ENCODE measurements at regions of chr1 and their contacts with region 1.

Region 1: GRCh38 chr1:38012363-38013226 is at the start of gene UTP11:
- DNase-seq: peak; percentile 63 to 95 (median 93)
- ATAC-seq: peak; percentile 97
- H3K4me3 ChIP-seq: peak within 1 kb of the TSS; percentile 84
- H3K4me3 Mint-ChIP-seq: peak within 1 kb of the TSS; percentile 96 to 99 (median 99)
- H3K27ac ChIP-seq: peak within 1 kb of the TSS; percentile 87
- H3K27ac Mint-ChIP-seq: peak within 1 kb of the TSS; percentile 95 to 99 (median 97)
- H3K4me1 ChIP-seq: peaks cover 10 to 14% of the 10 kb centered on the region in 2 donors
- H3K4me1 Mint-ChIP-seq: peaks cover 25 to 70% (median 47%) of the 10 kb centered on the region in 7 donors
- H3K27me3 ChIP-seq: no peaks in the 10 kb centered on the region
- H3K27me3 Mint-ChIP-seq: no peaks in the 10 kb centered on the region
- total RNA-seq, gene UTP11: 8.2 to 42.8 (median 15.7) TPM

Region 2: DNA sequence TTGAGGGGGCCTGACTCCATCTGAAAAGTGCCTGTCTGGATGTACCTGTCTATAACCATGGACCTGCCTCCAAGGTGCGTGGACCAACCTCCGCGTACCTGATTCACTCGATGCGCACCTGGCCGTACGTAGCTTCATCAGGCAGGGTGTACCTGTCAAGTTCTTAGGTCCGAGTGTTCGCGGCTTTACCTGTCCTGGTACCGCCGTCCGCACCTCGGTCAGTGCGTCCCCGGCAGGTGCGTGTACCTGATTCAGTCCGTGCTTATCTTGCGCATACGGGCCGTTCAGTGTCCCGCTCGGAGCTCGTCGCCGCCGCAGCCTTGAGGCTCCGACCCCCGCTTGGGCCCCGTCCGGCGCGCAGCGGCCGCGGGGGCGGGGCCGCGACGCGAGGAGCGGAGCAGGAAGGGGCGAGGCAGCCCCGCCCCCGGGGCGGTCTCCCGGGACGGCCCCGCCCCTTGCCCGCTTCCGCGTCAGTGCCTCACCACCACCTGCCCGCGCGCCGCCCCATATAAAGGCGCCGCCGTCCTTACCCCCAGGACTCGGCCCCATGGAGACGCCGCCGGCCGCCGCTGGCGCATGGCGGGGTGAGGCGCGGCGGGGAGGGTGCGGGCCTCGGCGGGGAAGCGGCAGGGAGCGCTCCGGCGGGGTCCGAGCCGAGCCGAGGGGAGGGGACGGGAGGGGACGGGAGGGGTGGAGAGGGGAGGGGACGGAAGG is 538.4 kb before region 1 on chr1 and contains the start of gene ZC3H12A:
- CTCF ChIA-PET with region 1: no interaction called
- POLR2A ChIA-PET with region 1: no interaction called
- intact Hi-C with region 1: loop called (anchors 5 kb)
- DNase-seq: peak; percentile 87 to 98 (median 93)
- ATAC-seq: peak; percentile 82
- H3K4me3 ChIP-seq: peak within 1 kb of the TSS; percentile 97
- H3K4me3 Mint-ChIP-seq: peak within 1 kb of the TSS; percentile 91 to 99 (median 96)
- H3K27ac ChIP-seq: peak within 1 kb of the TSS; percentile 95
- H3K27ac Mint-ChIP-seq: peak within 1 kb of the TSS; percentile 93 to 99 (median 98)
- H3K4me1 ChIP-seq: peaks cover 28 to 33% of the 10 kb centered on the region in 2 donors
- H3K4me1 Mint-ChIP-seq: peaks cover 43 to 59% (median 54%) of the 10 kb centered on the region in 7 donors
- H3K27me3 ChIP-seq: no peaks in the 10 kb centered on the region
- H3K27me3 Mint-ChIP-seq: no peaks in the 10 kb centered on the region
- total RNA-seq, gene ZC3H12A: 35.0 to 122 (median 46.7) TPM

Region 3: GRCh38 chr1:37595440-37596319 is 416.9 kb before region 1 on chr1 and contains the start of gene GNL2:
- CTCF ChIA-PET with region 1: no interaction called
- POLR2A ChIA-PET with region 1: no interaction called
- intact Hi-C with region 1: loop called in 1 of 2 experiments (anchors 5 kb)
- DNase-seq: peak; percentile 91 to 97 (median 95)
- ATAC-seq: peak; percentile 99
- H3K4me3 ChIP-seq: peak within 1 kb of the TSS; percentile 81
- H3K4me3 Mint-ChIP-seq: peak within 1 kb of the TSS; percentile 96 to 100 (median 99)
- H3K27ac ChIP-seq: peak within 1 kb of the TSS; percentile 86
- H3K27ac Mint-ChIP-seq: peak within 1 kb of the TSS; percentile 92 to 99 (median 98)
- H3K4me1 ChIP-seq: peaks cover 12 to 22% of the 10 kb centered on the region in 2 donors
- H3K4me1 Mint-ChIP-seq: peaks cover 17 to 43% (median 33%) of the 10 kb centered on the region in 7 donors
- H3K27me3 ChIP-seq: no peaks in the 10 kb centered on the region
- H3K27me3 Mint-ChIP-seq: peaks cover 0 to 12% (median 0%) of the 10 kb centered on the region in 5 donors
- total RNA-seq, gene GNL2: 33.3 to 60.9 (median 56.0) TPM

Region 4: GRCh38 chr1:37859507-37860345 is 152.9 kb before region 1 on chr1 and contains the start of gene MTF1:
- CTCF ChIA-PET with region 1: no interaction called
- POLR2A ChIA-PET with region 1: no interaction called
- intact Hi-C with region 1: loop called in 1 of 2 experiments (anchors 1 kb)
- DNase-seq: peak; percentile 85 to 98 (median 97)
- ATAC-seq: peak; percentile 99
- H3K4me3 ChIP-seq: peak within 1 kb of the TSS; percentile 94
- H3K4me3 Mint-ChIP-seq: peak within 1 kb of the TSS; percentile 89 to 100 (median 96)
- H3K27ac ChIP-seq: peak within 1 kb of the TSS; percentile 89
- H3K27ac Mint-ChIP-seq: peak within 1 kb of the TSS; percentile 90 to 99 (median 95)
- H3K4me1 ChIP-seq: peaks cover 12 to 19% of the 10 kb centered on the region in 2 donors
- H3K4me1 Mint-ChIP-seq: peaks cover 26 to 39% (median 33%) of the 10 kb centered on the region in 7 donors
- H3K27me3 ChIP-seq: no peaks in the 10 kb centered on the region
- H3K27me3 Mint-ChIP-seq: no peaks in the 10 kb centered on the region
- total RNA-seq, gene MTF1: 22.9 to 45.2 (median 27.1) TPM

Region 5: GRCh38 chr1:37946703-37947360 is 65.8 kb before region 1 on chr1 and contains the start of gene INPP5B:
- CTCF ChIA-PET with region 1: no interaction called
- POLR2A ChIA-PET with region 1: no interaction called
- intact Hi-C with region 1: loop called in 1 of 2 experiments (anchors 2 kb)
- DNase-seq: peak; percentile 25 to 79 (median 53)
- ATAC-seq: peak; percentile 91
- H3K4me3 ChIP-seq: peak within 1 kb of the TSS; percentile 61
- H3K4me3 Mint-ChIP-seq: peak within 1 kb of the TSS; percentile 81 to 98 (median 92)
- H3K27ac ChIP-seq: peak within 1 kb of the TSS; percentile 62
- H3K27ac Mint-ChIP-seq: peak within 1 kb of the TSS; percentile 66 to 97 (median 89)
- H3K4me1 ChIP-seq: peaks cover 0 to 7% of the 10 kb centered on the region in 2 donors
- H3K4me1 Mint-ChIP-seq: peaks cover 13 to 26% (median 15%) of the 10 kb centered on the region in 7 donors
- H3K27me3 ChIP-seq: no peaks in the 10 kb centered on the region
- H3K27me3 Mint-ChIP-seq: no peaks in the 10 kb centered on the region
- total RNA-seq, gene INPP5B: 23.3 to 35.7 (median 30.6) TPM

Region 6: GRCh38 chr1:37995751-37996345 is 16.7 kb before region 1 on chr1:
- CTCF ChIA-PET with region 1: interaction called, 14 read pairs
- POLR2A ChIA-PET with region 1: interaction called, 24 read pairs
- intact Hi-C with region 1: no loop called
- DNase-seq: peak in 1 of 9 donors; percentile 56
- ATAC-seq: no peak
- H3K4me3 ChIP-seq: peak overlapping the region; percentile 17
- H3K4me3 Mint-ChIP-seq: peak overlapping the region in 9 of 10 donors; percentile 6 to 88 (median 76)
- H3K27ac ChIP-seq: peak overlapping the region; percentile 62
- H3K27ac Mint-ChIP-seq: peak overlapping the region in 6 of 9 donors; percentile 65 to 95 (median 87)
- H3K4me1 ChIP-seq: peaks cover 0 to 8% of the 10 kb centered on the region in 2 donors
- H3K4me1 Mint-ChIP-seq: peaks cover 22 to 41% (median 29%) of the 10 kb centered on the region in 7 donors
- H3K27me3 ChIP-seq: no peaks in the 10 kb centered on the region
- H3K27me3 Mint-ChIP-seq: no peaks in the 10 kb centered on the region

Region 7: DNA sequence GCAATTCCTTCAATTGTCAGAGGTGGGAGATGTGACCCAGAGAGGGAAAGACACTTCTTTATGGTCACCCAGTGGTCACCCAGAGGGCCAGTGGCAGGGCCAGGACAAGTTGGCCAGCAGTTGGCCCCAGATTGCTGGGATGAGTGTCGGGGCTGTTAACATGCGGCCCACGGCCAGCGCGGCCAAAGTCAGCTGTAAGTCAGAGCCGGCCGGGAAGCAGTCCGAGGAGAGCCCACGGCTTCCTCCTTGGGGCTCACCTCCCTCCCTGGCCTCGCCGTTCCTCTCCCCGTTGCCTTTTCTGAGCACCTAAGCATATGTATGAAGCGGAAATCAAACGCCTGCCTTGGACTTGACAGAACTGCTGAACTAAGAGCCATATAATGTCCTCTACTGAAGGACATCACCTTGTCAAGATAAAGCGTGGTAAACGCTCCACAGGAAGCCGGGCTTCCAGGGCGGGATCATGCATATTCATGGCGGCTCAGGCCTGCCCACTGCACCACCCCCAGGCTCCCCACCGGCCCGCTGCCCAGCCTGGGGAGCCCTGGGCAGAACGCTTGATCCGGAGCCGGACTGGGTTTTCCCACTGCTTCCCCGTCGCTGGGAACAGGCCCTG is 279.4 kb after region 1 on chr1:
- CTCF ChIA-PET with region 1: no interaction called
- POLR2A ChIA-PET with region 1: no interaction called
- intact Hi-C with region 1: no loop called
- DNase-seq: peak in 1 of 9 donors; percentile 17
- ATAC-seq: no peak
- H3K4me3 ChIP-seq: no peak overlapping the region
- H3K4me3 Mint-ChIP-seq: peak overlapping the region in 1 of 10 donors; percentile 18
- H3K27ac ChIP-seq: no peak overlapping the region
- H3K27ac Mint-ChIP-seq: no peak overlapping the region
- H3K4me1 ChIP-seq: no peaks in the 10 kb centered on the region
- H3K4me1 Mint-ChIP-seq: peaks cover 0 to 7% (median 5%) of the 10 kb centered on the region in 7 donors
- H3K27me3 ChIP-seq: no peaks in the 10 kb centered on the region
- H3K27me3 Mint-ChIP-seq: peaks cover 51 to 61% (median 53%) of the 10 kb centered on the region in 5 donors

Measured in naive thymus-derived CD4-positive, alpha-beta T cell (primary cell).